Activated CD4-positive, alpha-beta memory T cell treated with anti-CD3 and anti-CD28 coated beads for 36 hours (primary cell): ENCODE measurements at regions of chr15 and their contacts with region 1.

Region 1: DNA sequence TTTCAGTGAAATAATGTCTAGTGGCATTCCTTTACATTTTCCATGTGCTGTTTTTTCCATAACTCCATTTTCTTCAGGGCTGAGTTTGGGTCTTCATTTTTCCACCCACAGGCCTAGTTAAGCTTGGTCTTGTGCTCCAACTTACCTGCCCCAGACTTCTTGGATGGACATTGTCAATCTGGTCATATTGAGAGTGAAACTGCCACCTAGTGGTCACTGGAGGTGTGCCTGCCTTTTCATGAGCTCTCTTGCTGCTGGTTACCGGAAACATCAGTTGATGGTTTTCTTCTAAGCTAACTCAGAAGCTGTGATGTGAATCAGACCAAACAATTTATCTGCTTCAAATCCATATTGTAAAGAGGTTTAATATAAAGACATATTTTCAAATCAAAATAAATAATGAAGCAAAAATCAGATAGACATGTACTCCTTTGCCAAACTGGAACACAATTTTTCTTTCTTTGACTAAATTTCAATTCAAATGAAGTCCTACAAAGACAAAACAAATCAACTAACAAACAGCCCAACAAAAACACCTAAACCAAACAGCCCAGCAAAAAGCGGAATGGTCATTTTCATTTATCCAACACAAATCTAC is 135.1 kb upstream of the RASGRP1 start:
- DNase-seq: peak; percentile 84
- H3K4me3 Mint-ChIP-seq: peak overlapping the region; percentile 50
- H3K27ac Mint-ChIP-seq: peak overlapping the region; percentile 83
- H3K4me1 Mint-ChIP-seq: peaks cover 55% of the 10 kb centered on the region
- H3K27me3 Mint-ChIP-seq: no peaks in the 10 kb centered on the region

Region 2: DNA sequence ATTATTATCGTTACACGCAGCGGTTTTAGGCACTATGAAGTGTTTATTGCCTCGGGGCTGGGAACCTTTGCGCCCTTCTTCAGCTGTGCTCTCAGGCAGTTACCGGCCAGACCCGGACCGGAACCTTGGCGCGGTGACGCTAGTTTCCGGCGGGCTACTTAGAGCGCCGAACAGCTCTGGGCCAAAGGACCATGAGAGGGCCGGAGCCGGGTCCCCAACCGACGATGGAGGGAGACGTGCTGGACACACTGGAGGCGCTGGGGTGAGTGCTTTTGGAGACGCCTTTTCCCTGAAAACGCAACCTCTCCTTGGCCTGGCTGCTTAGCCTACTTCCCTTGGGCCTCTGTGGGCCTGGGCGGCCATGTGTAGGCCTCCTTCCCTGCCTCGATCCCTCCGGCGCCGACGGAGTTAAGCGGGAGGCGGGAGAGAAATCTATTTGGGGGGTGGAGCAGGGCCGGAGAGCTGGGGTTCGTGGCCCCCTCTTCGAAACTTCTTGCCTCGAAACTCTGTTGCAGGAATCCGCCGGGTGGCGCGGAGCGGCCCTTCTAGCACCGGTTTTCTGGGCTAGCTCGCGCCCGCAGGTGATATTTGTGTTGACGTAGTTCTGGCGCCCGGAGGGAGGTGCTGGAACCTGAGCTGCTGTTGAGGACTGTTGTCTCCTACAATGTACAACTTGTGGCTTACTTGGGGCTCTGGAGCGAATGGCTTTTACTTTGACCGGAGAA is 245.6 kb before region 1 on chr15 and contains the start of gene FAM98B:
- CTCF ChIA-PET with region 1: interaction called, 56 read pairs
- POLR2A ChIA-PET with region 1: interaction called, 4 read pairs
- intact Hi-C with region 1: no loop called
- DNase-seq: peak; percentile 93
- H3K4me3 Mint-ChIP-seq: peak within 1 kb of the TSS; percentile 93
- H3K27ac Mint-ChIP-seq: peak within 1 kb of the TSS; percentile 89
- H3K4me1 Mint-ChIP-seq: peaks cover 22% of the 10 kb centered on the region
- H3K27me3 Mint-ChIP-seq: no peaks in the 10 kb centered on the region
- total RNA-seq, gene FAM98B: 40.2 to 44.7 TPM

Region 3: GRCh38 chr15:38479266-38479665 is 220.5 kb before region 1 on chr15:
- CTCF ChIA-PET with region 1: interaction called, 84 read pairs
- POLR2A ChIA-PET with region 1: no interaction called
- intact Hi-C with region 1: loop called (anchors 1 kb)
- DNase-seq: no peak
- H3K4me3 Mint-ChIP-seq: no peak overlapping the region
- H3K27ac Mint-ChIP-seq: no peak overlapping the region
- H3K4me1 Mint-ChIP-seq: peaks cover 29% of the 10 kb centered on the region
- H3K27me3 Mint-ChIP-seq: no peaks in the 10 kb centered on the region

Region 4: DNA sequence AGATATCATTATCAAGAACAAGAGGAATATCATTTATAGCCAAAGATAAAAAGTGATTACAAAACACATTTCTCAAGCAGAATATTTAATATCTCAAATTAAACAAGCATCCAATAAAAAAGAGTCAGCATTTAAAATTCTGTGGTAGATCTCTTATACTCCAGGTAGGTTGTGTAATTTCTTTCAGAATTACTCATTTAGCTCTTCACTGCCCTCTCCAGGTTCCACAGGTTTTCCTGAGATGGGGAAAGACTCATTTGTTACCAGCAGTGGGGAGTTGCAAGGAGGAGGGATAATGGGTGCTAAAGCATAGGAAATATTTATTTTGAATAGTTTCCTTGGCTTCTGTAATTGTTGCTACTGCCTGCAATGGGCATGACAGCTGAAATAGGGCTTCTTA is 52.0 kb before region 1 on chr15:
- CTCF ChIA-PET with region 1: interaction called, 10 read pairs
- POLR2A ChIA-PET with region 1: interaction called, 3 read pairs
- intact Hi-C with region 1: no loop called
- DNase-seq: no peak
- H3K4me3 Mint-ChIP-seq: no peak overlapping the region
- H3K27ac Mint-ChIP-seq: no peak overlapping the region
- H3K4me1 Mint-ChIP-seq: peaks cover 74% of the 10 kb centered on the region
- H3K27me3 Mint-ChIP-seq: no peaks in the 10 kb centered on the region

Region 5: DNA sequence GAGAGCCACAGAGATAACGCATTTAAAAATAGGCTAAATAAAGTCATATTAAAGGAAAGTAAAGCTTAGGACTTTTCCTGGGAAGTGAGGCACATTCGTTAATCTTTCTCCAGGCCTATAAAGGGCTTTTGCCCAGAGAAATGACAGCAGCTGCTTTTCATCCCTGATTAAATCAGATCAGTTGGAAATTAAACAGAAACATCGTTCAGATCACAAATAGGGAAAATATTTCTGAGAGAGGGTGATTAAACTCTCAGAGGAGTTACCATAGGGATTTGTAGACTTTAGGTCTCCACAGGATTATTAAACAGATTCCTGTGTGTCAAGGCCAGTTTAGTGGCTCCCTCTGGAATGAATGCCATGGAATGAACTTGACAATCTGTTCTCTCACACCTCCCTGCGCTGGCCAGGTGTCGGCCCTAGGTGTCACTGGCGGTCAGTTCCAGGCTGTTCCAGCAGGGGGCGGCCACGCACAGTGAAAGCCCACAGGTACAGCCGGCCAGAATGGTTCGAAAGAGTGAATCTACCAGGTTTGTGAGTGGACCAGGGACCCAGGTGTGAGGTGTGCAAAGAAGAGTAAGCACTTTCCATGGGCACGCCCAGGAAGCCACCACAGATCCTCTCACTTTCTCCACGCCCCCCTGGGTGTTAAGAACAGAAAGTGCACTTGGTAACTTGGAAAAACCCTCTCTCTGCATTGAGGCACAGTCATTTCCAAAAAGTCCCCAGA is 117.9 kb after region 1 on chr15:
- CTCF ChIA-PET with region 1: interaction called, 3 read pairs
- POLR2A ChIA-PET with region 1: no interaction called
- intact Hi-C with region 1: loop called (anchors 10 kb)
- DNase-seq: peak; percentile 89
- H3K4me3 Mint-ChIP-seq: no peak overlapping the region
- H3K27ac Mint-ChIP-seq: no peak overlapping the region
- H3K4me1 Mint-ChIP-seq: peaks cover 5% of the 10 kb centered on the region
- H3K27me3 Mint-ChIP-seq: peaks cover 3% of the 10 kb centered on the region

Region 6: DNA sequence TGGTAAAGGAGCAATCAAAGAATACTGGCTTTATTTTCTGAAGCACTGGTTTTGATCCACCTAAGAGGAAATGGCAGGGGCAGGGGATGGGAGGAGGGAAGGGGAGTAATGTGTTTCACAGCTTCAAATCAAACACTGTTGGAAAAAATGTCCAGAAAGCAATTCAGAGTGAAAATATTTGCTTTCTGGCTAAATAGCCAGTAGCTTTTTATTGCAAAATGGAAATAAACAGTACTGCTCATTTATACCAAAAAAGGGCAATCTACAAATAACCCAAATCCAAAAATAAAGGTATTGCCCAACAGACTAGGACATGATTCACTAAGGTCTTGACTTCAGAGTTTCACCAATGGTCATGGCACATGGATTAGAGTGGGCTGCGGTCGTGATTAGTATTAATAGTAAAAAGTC is 601.9 kb after region 1 on chr15:
- CTCF ChIA-PET with region 1: no interaction called
- POLR2A ChIA-PET with region 1: no interaction called
- intact Hi-C with region 1: no loop called
- DNase-seq: no peak
- H3K4me3 Mint-ChIP-seq: no peak overlapping the region
- H3K27ac Mint-ChIP-seq: no peak overlapping the region
- H3K4me1 Mint-ChIP-seq: no peaks in the 10 kb centered on the region
- H3K27me3 Mint-ChIP-seq: peaks cover 12% of the 10 kb centered on the region